Left colon (tissue), 2 donors: ENCODE measurements at regions of chrX and their contacts with region 1.

Region 1: GRCh38 chrX:148984238-148984637 is 483.8 kb downstream of the AFF2 start:
- DNase-seq: no peak
- ATAC-seq: no peak

Region 2: DNA sequence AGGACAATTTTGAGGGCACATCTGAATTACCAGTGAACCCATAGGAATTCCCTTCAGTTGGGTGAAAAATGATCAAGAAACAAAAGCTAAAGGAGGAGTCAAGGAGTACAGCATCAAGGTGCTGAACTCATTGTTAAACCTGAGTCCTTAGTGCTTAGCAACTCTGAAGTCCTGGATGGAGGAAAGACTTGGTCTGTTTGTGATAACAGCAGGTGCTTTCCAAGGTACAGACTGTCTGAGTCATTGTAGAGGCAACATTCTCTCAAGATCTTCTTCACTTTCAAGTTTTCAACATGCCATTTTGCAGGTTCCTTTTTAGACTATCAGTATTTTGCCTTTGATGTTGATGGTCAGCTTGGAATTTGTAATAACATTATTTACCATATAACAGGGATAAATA is 189.9 kb before region 1 on chrX:
- intact Hi-C with region 1: no loop called
- DNase-seq: no peak
- ATAC-seq: no peak

Region 3: DNA sequence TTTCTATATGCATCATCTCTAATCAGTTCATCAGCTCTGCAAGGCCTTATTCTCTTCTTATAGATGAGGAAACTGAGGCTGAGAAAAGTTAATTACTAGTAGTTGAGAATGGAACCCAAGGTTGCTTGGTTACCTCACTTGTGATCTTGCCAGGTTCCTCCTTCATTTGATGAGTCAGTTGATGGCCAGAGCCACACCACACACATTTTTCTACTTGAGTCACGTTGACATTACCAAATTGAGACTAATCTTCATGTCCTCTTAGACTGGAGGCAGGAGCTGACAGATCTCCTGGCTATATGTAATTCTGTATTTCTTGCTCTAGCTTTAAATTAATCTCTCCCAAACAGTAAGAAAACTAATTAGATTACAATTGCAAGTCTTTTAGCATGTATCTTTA is 55.4 kb before region 1 on chrX:
- intact Hi-C with region 1: loop called in 1 of 2 experiments (anchors 10 kb)
- DNase-seq: no peak
- ATAC-seq: no peak

Region 4: GRCh38 chrX:149129767-149130166 is 145.5 kb after region 1 on chrX:
- intact Hi-C with region 1: no loop called
- DNase-seq: no peak
- ATAC-seq: no peak

Region 5: GRCh38 chrX:149296092-149296491 is 311.9 kb after region 1 on chrX:
- intact Hi-C with region 1: no loop called
- DNase-seq: no peak
- ATAC-seq: no peak